Activated naive CD8-positive, alpha-beta T cell treated with anti-CD3 and anti-CD28 coated beads, Interleukin-2, amount 10 ng/mL, durations not matched to agents 7 days and 5 days (primary cell): ENCODE measurements at regions of chr5 and their contacts with region 1.

Region 1: GRCh38 chr5:179806250-179807222 is at the start of gene MGAT4B:
- DNase-seq: peak; percentile 84
- ATAC-seq: peak; percentile 84
- H3K4me3 Mint-ChIP-seq: peak within 1 kb of the TSS; percentile 74
- H3K27ac Mint-ChIP-seq: peak within 1 kb of the TSS; percentile 73
- H3K4me1 Mint-ChIP-seq: peaks cover 30% of the 10 kb centered on the region
- H3K27me3 Mint-ChIP-seq: no peaks in the 10 kb centered on the region
- total RNA-seq, gene MGAT4B: 118 TPM

Region 2: DNA sequence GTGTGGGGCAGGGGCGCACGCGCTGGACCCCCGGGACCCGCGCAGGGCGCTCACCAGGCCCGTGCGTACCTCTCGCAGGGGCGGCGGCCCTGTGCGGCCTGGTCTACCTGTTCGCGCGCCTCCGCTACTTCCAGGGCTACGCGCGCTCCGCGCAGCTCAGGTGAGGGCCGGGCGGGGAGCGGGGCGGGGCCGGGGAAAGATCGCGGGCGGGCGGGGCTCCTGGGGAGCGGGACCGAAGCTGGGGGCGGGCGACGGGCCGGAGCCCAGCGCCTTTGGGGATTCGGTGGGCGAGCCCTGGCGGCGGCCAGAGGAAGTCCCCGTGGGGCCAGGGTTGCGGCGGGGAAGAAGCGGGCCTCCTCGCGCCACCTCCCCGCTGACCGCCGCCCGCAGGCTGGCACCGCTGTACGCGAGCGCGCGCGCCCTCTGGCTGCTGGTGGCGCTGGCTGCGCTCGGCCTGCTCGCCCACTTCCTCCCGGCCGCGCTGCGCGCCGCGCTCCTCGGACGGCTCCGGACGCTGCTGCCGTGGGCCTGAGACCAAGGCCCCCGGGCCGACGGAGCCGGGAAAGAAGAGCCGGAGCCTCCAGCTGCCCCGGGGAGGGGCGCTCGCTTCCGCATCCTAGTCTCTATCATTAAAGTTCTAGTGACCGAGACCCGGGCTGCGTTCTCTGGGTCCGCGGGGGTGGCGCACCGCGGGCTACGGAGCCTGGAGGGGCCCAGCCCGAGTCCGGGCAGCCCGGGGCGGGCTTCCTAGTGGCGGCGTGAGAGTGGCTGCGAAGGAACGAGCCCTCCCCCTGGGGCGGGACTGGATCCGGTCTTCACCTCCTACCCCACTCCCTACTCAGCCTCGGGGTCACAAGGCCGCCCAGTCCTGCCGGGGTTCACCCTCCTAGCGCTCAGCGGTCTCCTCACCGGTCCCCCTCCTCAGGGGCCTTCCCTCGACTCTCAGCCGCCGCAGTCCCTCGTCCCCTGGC is 10.4 kb before region 1 on chr5:
- POLR2A ChIA-PET with region 1: interaction called, 13 read pairs
- DNase-seq: peak; percentile 86
- ATAC-seq: peak; percentile 65
- H3K4me3 Mint-ChIP-seq: peak overlapping the region; percentile 47
- H3K27ac Mint-ChIP-seq: peak overlapping the region; percentile 60
- H3K4me1 Mint-ChIP-seq: peaks cover 23% of the 10 kb centered on the region
- H3K27me3 Mint-ChIP-seq: no peaks in the 10 kb centered on the region